ENCODE measurements at regions of chrX and their contacts with region 1.

Region 1: GRCh38 chrX:46637937-46638336 is 64.4 kb downstream of the CHST7 start:
- DNase-seq: no peak
- H3K4me3 ChIP-seq: no peak overlapping the region
- H3K27ac ChIP-seq: no peak overlapping the region
- H3K4me1 ChIP-seq: no peaks in the 10 kb centered on the region
- H3K27me3 ChIP-seq: no peaks in the 10 kb centered on the region
- CTCF ChIP-seq: no peak
- POLR2A ChIP-seq: no peak

Region 2: DNA sequence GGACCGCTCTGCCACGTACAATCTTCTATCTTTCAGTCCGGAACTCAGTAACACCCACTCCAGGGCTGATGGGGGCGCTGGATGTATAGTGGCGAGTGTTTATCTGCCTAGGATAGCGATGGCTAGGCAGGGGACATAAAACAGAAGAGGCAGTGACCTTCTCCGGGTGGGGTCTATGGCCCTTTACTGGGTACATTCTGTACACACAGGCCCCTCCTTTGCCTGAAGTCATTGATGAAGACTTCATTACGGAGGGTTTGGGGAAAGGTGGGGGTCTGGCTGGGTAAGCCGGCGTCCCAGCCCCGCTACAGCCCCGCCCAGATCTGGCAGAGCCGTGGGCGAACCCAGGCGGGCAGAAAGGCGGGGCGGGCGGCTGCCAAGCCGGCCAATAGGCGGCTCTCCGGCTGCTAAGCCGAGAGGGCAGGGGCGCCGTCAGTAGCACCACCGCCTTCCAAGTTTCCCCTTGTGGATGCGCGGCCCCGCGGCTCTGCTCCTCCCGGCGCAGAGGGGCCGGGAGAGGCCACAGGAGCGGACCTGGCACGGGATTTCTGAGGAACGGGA is 64.5 kb before region 1 on chrX and contains the start of gene CHST7:
- intact Hi-C with region 1: loop called (anchors 10 kb)
- DNase-seq: peak; percentile 66
- H3K4me3 ChIP-seq: peak within 1 kb of the TSS; percentile 56 to 66
- H3K27ac ChIP-seq: peak within 1 kb of the TSS in 1 of 2 donors; percentile 45
- H3K4me1 ChIP-seq: no peaks in the 10 kb centered on the region
- H3K27me3 ChIP-seq: no peaks in the 10 kb centered on the region
- CTCF ChIP-seq: peak in 2 of 3 experiments; percentile 4 to 12
- POLR2A ChIP-seq: no peak
- total RNA-seq, gene CHST7: 9.4 to 18.7 TPM

Region 3: DNA sequence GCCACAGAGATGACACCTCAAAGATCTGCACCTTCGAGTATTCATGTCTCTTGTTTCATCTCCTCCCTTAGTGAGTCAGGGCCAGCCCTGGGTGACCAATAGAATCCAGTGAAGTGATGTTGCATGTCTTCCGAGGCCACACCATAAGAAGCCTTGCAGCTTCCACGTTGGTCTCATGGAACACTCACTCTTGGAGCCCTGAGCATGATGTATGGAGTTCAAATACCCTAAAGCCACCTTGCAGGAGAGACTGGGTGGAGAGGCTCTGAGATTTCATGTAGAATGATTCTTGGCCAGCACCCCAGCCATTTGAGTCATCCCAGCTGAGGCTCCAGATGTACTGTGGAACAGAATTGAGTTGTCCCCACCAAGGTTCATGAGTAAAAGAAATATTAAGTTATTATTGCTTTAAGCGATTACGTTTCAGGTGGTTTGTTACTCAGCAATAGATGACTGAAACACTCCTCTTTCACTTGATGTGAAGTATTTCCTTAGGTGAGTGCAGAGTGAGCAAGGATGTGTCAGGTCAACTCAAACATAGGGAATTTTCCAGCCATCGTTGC is 193.9 kb after region 1 on chrX:
- intact Hi-C with region 1: no loop called
- DNase-seq: no peak
- H3K4me3 ChIP-seq: no peak overlapping the region
- H3K27ac ChIP-seq: no peak overlapping the region
- H3K4me1 ChIP-seq: no peaks in the 10 kb centered on the region
- H3K27me3 ChIP-seq: no peaks in the 10 kb centered on the region
- CTCF ChIP-seq: no peak
- POLR2A ChIP-seq: no peak